Activated CD4-positive, alpha-beta T cell treated with anti-CD3 and anti-CD28 coated beads for 36 hours (primary cell): ENCODE measurements at regions of chr7 and their contacts with region 1.

Region 1: DNA sequence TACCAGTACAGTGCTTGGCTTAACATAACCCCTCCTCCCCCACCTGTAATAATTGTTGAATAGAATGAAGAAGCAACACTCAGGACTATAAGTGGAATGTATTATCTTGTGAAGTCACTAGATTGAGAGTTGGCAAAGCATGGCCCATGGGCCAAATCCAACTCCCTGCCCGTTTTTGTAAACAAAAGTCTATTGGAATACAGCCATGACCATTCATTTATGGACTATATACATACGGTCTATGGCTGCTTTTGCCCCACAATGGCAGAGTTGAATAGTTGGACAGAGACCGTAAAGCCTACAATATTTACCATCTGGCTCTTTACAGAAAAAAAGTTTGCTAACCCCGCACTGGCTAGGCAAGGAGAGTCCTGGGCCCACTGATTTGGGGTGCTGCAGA is 48.1 kb upstream of the CYCS start:
- DNase-seq: no peak
- ATAC-seq: no peak
- H3K4me3 Mint-ChIP-seq: no peak overlapping the region
- H3K27ac Mint-ChIP-seq: no peak overlapping the region
- H3K4me1 Mint-ChIP-seq: no peaks in the 10 kb centered on the region
- H3K27me3 Mint-ChIP-seq: no peaks in the 10 kb centered on the region

Region 2: GRCh38 chr7:25158966-25159365 is 14.2 kb before region 1 on chr7:
- CTCF ChIA-PET with region 1: interaction called, 12 read pairs
- POLR2A ChIA-PET with region 1: no interaction called
- intact Hi-C with region 1: no loop called
- DNase-seq: no peak
- ATAC-seq: no peak
- H3K4me3 Mint-ChIP-seq: no peak overlapping the region
- H3K27ac Mint-ChIP-seq: no peak overlapping the region
- H3K4me1 Mint-ChIP-seq: peaks cover 2% of the 10 kb centered on the region
- H3K27me3 Mint-ChIP-seq: no peaks in the 10 kb centered on the region